Posterior vena cava (tissue), 2 donors: ENCODE measurements at regions of chr2 and their contacts with region 1.

Region 1: DNA sequence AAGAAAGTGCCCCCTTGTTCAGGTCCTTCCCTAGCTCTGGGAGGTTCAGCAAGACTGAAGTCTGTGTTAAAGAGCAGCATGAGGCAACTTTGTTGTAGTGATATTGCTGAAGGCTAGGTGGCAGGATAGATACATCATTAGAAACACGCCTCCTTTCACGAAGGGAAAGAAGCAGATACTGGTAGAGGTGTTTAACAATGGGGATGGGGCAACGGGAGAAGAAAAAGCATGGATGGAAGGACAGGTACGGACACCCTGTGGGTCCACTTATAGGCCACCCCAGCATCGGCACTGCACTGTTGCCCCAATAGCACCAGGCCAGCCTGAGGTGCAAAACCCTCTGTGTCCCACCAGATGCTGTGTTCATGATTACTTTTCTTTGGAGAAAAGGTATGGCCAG is 3.5 kb upstream of the IGFBP5 start:
- DNase-seq: no peak

Region 2: GRCh38 chr2:216555274-216555673 is 143.6 kb before region 1 on chr2:
- intact Hi-C with region 1: no loop called
- DNase-seq: peak; percentile 85

Region 3: GRCh38 chr2:216765761-216766262 is 66.9 kb after region 1 on chr2:
- intact Hi-C with region 1: no loop called
- DNase-seq: no peak

Region 4: DNA sequence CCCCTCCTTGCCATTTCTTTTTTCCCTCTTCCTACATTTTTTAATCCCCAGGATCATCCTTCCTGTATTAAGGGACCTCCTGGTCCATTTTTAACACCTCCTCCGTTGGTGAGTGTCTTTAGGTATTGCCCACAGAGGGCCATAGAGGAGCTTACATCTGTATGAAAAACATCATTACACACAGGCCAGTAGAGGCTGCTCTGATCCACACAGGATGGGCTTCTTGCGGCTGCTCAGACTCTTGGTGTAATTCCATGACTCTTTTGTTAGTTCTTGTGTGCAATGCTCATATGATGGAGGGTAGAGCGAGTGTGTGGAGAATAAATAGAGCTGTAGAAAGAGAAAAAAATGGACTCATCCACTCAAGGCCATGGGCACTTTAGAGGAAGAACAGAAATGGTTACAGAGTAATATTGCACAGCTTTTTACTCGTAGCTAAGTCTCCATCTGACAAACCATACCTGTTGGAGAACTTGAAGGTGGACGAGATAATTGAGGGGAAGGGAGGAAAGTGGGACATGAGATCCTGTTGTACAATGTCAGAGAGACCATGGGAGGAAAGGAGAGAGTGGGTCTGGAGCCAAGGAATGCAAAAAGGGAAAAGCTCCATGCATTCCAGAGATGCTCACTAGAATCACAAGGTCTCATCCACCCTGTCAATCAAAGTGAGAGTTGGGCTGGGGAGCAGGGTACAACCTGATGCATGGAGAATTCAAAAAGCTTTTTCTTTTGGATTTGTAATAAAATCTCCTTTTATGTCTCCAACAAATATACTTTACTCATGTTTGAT is 290.6 kb after region 1 on chr2:
- intact Hi-C with region 1: loop called in 1 of 2 experiments (anchors 10 kb)
- DNase-seq: no peak

Region 5: DNA sequence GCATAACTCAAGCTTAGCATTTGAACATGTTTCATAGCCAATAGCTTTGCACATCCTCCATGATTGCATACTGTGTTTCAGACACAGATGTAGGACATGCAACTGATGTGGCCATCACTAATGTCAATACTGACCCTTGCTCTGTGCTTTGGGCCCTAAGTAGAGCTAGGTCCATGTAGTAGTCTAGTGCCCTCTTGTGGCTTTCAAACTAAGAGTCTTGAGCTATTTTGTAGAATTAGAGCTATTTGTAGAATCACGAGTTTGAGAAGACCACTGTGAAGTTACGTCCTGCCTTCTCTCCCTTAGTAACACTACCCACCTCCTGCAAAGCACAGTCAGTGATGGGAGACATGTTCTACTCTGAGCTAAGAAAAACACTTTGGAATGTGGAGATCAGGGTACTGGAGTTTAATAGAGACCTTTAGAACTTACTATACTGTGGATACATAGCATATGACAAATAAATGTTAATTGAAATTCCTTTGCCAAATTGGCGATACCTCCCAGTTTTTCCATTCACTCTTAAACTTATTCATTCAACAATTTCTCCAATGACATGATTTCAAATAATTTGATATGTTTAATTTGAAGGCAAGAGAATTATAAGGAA is 467.5 kb after region 1 on chr2:
- intact Hi-C with region 1: loop called in 1 of 2 experiments (anchors 10 kb)
- DNase-seq: no peak

Region 6: DNA sequence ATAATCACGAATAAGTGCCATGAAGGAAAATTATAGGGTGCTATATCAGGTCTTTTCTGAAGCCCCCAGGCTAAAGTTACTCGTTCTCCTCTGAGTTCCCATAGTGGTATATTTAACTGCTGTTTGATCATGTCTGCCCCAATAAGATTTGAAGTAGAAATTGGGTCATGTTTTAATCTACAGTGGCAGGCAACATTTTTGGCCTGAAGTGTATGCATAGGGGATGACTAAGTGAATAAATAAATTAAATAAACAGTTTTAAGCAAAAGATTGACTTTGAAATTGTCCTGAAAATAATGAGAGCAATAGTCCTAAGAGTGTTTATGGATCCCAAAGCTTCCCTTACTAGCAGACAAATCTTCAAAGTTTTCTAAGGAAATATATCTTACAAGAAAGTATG is 803.0 kb after region 1 on chr2:
- intact Hi-C with region 1: loop called in 1 of 2 experiments (anchors 10 kb)
- DNase-seq: no peak

Region 7: DNA sequence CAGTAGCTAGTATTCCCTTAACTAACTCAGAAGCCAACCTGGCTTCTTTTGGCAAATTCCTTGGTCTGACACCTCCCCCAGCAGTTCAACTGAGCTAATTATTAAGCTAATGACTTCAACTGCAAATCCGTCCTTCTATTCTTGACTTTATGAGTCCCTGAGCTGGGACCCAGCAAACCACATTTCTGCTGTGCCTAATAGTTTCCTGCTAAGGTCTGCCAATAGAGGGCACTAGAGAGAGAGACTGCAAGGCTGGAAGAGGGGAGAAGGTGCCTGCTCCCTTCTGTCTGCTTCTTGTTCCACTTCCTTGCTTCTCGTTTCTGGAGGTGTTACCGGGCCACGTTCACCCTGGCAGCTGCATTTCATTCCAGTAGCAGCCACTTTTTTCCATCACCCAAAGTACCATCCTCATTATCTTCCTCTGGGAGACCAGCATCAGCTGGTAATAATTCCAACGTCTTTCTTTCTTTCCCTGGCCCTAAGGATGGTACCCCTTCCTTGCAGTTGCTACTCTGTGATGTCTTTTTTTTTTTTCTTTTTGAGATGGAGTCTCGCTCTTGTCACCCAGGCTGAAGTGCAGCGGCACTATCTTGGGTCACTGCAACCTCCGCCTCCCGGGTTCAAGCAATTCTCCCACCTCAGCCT is 951.9 kb after region 1 on chr2:
- intact Hi-C with region 1: loop called in 1 of 2 experiments (anchors 10 kb)
- DNase-seq: no peak

Region 8: DNA sequence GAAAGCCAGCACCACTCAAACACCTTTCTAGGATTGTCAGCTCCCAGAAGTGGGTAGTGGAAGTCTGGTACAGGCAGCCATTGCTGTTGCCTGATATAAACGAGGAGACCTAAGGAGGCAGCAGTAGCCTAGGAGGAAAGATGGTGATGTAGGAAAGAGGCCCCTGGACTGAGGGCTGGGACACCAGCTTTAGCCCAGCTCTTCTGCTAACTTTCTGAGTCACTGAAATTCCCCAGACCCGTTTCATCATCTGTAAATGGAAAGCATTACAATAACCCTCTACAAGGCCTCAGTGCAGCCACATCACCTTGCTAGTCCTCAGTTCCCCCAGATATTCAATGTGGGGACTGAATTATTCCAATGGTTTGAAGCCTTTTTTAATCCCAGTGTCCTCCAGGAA is 967.4 kb after region 1 on chr2:
- intact Hi-C with region 1: no loop called
- DNase-seq: no peak

Region 9: GRCh38 chr2:217756375-217757107 is 1057.6 kb after region 1 on chr2:
- intact Hi-C with region 1: loop called in 1 of 2 experiments (anchors 10 kb)
- DNase-seq: peak; percentile 91